ENCODE measurements at regions of chr12 and their contacts with region 1.

Region 1: GRCh38 chr12:46364777-46365580 is 7.6 kb downstream of the SLC38A2 start:
- DNase-seq: peak; percentile 71 to 73
- ATAC-seq: peak; percentile 63

Region 2: DNA sequence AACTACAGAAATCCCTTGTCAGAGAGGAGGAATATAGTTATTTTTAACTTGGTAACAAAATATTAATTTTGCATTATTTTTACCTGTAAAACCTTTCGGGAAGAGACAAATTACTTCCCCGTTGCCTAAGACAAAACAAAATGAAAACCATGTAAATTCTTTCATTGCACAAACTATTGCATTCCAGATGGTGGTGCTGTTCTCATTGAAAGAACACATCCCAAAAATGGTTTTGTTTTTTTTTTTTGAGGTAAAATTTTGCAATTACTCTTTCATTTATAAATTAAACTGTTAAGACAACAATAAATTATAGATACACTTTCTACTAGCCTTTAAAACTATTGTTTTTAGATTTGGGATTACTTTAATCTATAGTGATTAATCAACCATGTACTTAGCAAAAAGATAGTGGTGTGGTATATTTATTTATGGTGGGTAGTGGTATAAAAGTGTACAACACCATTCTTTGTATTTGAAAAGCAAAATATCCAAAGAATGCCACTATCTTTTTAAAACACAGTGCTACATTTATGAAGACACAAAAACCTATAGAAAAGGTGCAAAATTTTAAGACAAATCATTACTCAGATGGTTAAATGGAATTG is 211.6 kb before region 1 on chr12:
- intact Hi-C with region 1: loop called in 1 of 2 experiments (anchors 10 kb)
- DNase-seq: no peak
- ATAC-seq: no peak

Region 3: GRCh38 chr12:46268590-46269558 is 96.1 kb before region 1 on chr12 and contains the start of gene SLC38A1:
- intact Hi-C with region 1: loop called in 1 of 2 experiments (anchors 10 kb)
- DNase-seq: peak; percentile 90 to 93
- ATAC-seq: peak; percentile 73
- total RNA-seq, gene SLC38A1: 126 to 149 TPM

Measured in left colon (tissue), 2 donors.